ENCODE measurements at regions of chr6 and their contacts with region 1.

Region 1: DNA sequence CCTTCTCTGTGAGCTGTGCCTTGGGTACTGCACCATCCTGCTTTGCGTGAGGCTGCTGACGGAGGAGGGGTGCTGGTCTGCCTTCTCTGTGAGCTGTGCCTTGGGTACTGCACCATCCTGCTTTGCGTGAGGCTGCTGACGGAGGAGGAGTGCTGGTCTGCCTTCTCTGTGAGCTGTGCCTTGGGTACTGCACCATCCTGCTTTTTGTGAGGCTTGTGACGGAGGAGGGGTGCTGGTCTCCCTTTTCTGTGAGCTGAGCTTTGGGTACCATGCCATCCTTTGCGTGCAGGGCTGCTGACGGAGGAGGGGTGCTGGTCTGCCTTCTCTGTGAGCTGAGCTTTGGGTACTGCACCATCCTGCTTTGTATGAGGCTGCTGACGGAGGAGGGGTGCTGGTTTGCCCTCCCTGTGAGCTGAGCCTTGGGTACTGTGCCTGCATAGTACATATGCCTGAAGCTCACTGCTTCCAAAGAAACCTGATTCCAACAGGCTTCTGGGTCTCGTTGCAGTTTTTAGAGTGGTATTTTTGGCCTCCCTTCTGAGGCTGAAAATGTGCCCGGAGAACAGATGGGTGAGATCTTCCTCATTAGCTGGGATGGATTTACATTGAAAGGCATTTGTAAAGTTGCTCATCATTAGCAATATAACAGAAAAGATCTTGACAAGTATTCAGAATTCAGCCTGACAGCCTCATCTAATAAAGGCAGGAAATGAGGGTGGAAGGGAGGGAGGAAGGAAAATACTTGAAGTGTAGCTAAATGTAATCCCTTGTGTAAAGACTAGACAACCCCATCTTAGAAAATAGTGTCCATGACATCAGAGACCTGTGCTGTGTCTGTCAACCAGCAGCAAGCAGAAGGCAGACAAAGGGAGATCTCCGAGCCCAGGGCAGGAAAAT is 46.8 kb upstream of the UNC93A start:
- DNase-seq: no peak
- H3K4me3 ChIP-seq: peak overlapping the region in 1 of 4 experiments; percentile 31; a peak in 3 of 8 replicates
- H3K27ac ChIP-seq: no peak overlapping the region
- H3K4me1 ChIP-seq: peaks cover 13 to 42% (median 33%) of the 10 kb centered on the region in 4 experiments
- H3K27me3 ChIP-seq: no peaks in the 10 kb centered on the region
- CTCF ChIP-seq: no peak
- EP300 ChIP-seq: no peak
- POLR2A ChIP-seq: no peak
- RAD21 ChIP-seq: no peak

Region 2: GRCh38 chr6:167219967-167220512 is 24.3 kb before region 1 on chr6:
- CTCF ChIA-PET with region 1: interaction called, 15 read pairs
- POLR2A ChIA-PET with region 1: interaction called, 5 read pairs
- DNase-seq: no peak
- H3K4me3 ChIP-seq: no peak overlapping the region
- H3K27ac ChIP-seq: no peak overlapping the region
- H3K4me1 ChIP-seq: peaks cover 3 to 22% (median 12%) of the 10 kb centered on the region in 4 experiments; a peak in 6 of 7 replicates
- H3K27me3 ChIP-seq: peaks cover 0 to 3% (median 0%) of the 10 kb centered on the region in 4 experiments; a peak in 3 of 7 replicates
- CTCF ChIP-seq: no peak
- EP300 ChIP-seq: no peak
- POLR2A ChIP-seq: no peak
- RAD21 ChIP-seq: no peak

Region 3: DNA sequence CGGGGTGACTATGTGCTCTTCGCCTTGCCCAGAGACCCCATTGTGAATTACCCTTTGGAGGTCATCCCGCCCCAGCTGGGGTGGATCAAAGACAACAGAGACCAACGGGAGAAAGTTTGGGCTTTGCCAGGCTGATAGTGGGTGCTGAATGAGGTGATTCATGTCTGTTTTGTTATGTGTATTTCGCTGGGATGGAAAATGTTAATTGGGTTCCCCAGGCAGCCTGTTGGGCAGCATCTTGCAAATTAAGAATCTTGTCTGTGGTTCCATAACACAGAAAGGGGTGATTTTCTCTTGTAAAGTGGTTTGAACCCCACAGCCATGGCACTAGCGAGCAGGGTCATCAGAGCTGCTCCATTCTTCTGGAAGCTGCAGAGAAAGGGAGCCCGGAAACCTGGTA is 16.3 kb before region 1 on chr6:
- CTCF ChIA-PET with region 1: interaction called, 28 read pairs
- POLR2A ChIA-PET with region 1: interaction called, 19 read pairs
- DNase-seq: peak; percentile 60 to 70
- H3K4me3 ChIP-seq: peak overlapping the region; percentile 67 to 90 (median 75)
- H3K27ac ChIP-seq: no peak overlapping the region
- H3K4me1 ChIP-seq: peaks cover 9 to 32% (median 22%) of the 10 kb centered on the region in 4 experiments
- H3K27me3 ChIP-seq: no peaks in the 10 kb centered on the region
- CTCF ChIP-seq: no peak
- EP300 ChIP-seq: no peak
- POLR2A ChIP-seq: peak in 1 of 2 experiments; percentile 38; a peak in 1 of 3 replicates
- RAD21 ChIP-seq: no peak

Region 4: GRCh38 chr6:167255918-167256553 is 11.7 kb after region 1 on chr6:
- CTCF ChIA-PET with region 1: interaction called, 13 read pairs
- POLR2A ChIA-PET with region 1: interaction called, 5 read pairs
- DNase-seq: peak in 1 of 2 experiments; percentile 49
- H3K4me3 ChIP-seq: no peak overlapping the region
- H3K27ac ChIP-seq: no peak overlapping the region
- H3K4me1 ChIP-seq: no peaks in the 10 kb centered on the region
- H3K27me3 ChIP-seq: no peaks in the 10 kb centered on the region
- CTCF ChIP-seq: peak in 2 of 3 experiments; percentile 49 to 53; a peak in 3 of 4 replicates
- EP300 ChIP-seq: no peak
- POLR2A ChIP-seq: no peak
- RAD21 ChIP-seq: peak; percentile 53 to 62